H1 (cell line): ENCODE measurements at regions of chr17 and their contacts with region 1.

Region 1: GRCh38 chr17:50151041-50151936 is 812 bp upstream of the PPP1R9B start:
- DNase-seq: peak; percentile 71 to 90
- H3K4me3 ChIP-seq: peak overlapping the region; percentile 57 to 65 (median 62)
- H3K27ac ChIP-seq: no peak overlapping the region
- H3K4me1 ChIP-seq: peaks cover 0 to 29% (median 17%) of the 10 kb centered on the region in 4 experiments; a peak in 6 of 7 replicates
- H3K27me3 ChIP-seq: peaks cover 2 to 17% (median 15%) of the 10 kb centered on the region in 4 experiments; a peak in 6 of 7 replicates
- CTCF ChIP-seq: peak; percentile 29 to 53 (median 32); a peak in 3 of 4 replicates
- EP300 ChIP-seq: 0 out of 3 replicates have a peak, but pooled peaks of 1 of the 2 experiments have one; percentile 17
- POLR2A ChIP-seq: no peak
- RAD21 ChIP-seq: peak in 1 of 2 experiments; percentile 6; a peak in 2 of 4 replicates

Region 2: DNA sequence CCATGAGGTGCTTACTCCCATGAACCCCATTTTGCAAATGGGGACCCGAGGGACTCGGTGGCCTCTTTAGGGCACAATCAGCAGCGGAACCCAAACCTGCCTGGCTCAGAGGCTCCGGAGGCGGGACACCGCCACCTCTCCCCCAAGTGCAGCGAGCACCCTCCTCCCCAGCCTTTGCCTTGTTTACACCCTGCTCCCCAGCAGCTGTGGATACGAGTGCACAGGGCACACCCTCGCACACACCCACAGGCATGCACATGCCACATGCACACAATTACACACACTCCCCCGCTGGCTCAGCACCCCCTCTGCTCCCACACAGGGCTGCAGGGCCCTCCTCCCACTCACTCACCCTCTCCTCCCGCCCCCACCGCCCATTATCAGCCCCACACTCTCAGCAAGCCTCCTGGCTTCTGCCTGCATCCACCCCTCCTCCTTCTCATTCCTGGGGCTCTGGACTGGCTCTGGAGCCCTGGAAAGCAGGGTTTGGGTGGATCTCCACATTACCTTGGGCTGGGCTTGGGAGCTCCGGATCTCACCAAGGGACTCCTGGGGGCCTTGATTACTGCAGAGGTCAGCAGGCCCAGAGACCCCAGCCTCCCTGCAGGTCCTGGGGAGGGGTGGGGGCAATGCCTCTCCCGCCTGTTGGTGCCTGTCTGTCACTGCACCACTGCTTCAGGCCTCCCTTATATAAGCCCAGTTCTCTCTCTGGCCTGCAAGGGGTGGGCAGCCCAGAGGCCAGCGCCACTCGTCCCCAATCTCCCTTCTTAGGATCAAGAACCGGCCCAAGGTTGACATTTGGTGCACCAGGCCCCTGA is 49.7 kb before region 1 on chr17:
- CTCF ChIA-PET with region 1: interaction called, 11 read pairs
- POLR2A ChIA-PET with region 1: no interaction called
- DNase-seq: no peak
- H3K4me3 ChIP-seq: peak overlapping the region in 2 of 4 experiments; percentile 15 to 16; a peak in 3 of 8 replicates
- H3K27ac ChIP-seq: no peak overlapping the region
- H3K4me1 ChIP-seq: peaks cover 0 to 19% (median 12%) of the 10 kb centered on the region in 4 experiments; a peak in 6 of 7 replicates
- H3K27me3 ChIP-seq: no peaks in the 10 kb centered on the region; a peak in 1 of 7 replicates
- CTCF ChIP-seq: no peak
- EP300 ChIP-seq: no peak
- POLR2A ChIP-seq: no peak
- RAD21 ChIP-seq: no peak

Region 3: DNA sequence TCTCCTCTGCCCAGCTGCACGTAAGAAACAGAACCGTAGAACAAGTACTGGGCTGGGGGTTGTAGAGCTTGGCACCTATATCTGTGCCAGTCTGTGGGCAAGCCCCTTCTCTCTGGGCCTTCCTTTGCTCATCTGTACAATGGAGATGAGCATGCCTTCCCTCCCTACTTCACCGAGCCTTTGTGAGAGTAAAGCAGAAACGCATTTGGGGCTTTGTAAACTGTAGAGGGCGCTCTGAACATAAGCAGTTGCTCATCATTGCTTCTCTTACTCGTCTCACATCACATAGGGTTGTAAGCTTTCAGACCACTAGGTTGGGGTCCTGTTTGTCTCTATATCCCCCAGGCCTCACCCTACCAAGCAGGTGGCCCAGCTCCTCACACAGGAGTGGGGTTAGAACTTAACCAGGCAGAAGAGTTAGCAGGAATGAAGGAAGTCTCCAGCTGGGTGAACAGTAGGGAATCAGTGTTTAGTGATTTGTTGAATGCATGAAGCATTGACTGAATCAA is 36.4 kb before region 1 on chr17:
- CTCF ChIA-PET with region 1: interaction called, 123 read pairs
- POLR2A ChIA-PET with region 1: interaction called, 4 read pairs
- DNase-seq: peak in 1 of 2 experiments; percentile 66
- H3K4me3 ChIP-seq: no peak overlapping the region
- H3K27ac ChIP-seq: no peak overlapping the region
- H3K4me1 ChIP-seq: peaks cover 6 to 14% (median 11%) of the 10 kb centered on the region in 4 experiments
- H3K27me3 ChIP-seq: peaks cover 0 to 18% (median 12%) of the 10 kb centered on the region in 4 experiments; a peak in 5 of 7 replicates
- CTCF ChIP-seq: peak in 2 of 3 experiments; percentile 89 to 93; a peak in 3 of 4 replicates
- EP300 ChIP-seq: no peak
- POLR2A ChIP-seq: no peak
- RAD21 ChIP-seq: peak; percentile 68 to 73

Region 4: DNA sequence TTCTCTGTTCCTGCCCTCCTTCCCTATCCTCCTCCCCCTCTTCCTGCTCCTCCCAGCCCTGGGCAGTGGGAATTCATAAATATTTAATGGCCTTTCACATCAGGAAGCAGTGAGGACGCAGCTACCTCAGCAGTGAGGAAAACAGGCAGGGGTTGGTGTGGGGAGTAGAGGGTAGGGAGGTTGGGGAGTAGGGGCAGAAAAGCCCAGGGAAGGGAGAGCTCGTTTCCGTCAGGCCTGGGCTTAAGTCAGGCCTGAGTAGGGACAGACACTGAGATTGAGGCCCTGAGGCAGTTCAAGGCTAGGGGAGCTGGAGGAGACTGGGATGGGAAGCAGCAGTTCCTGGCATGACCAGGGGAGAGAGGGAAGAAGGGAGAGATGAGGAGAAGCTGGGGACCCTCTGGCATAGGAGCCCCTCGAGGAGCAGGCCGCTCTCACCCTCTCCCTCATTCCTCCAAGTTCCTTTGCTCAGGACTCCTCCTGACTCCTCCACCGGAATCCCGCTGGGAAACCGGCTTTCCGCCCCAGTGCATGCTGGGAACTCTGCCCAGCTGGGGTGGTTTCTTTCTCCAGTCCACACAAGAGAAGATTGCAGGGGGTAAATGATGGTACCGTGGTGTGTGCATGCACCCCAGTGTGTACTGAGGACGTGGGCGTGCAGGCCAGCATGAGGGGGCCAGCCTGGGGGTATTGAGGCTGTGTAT is 27.5 kb before region 1 on chr17:
- CTCF ChIA-PET with region 1: interaction called, 299 read pairs
- POLR2A ChIA-PET with region 1: interaction called, 13 read pairs
- DNase-seq: no peak
- H3K4me3 ChIP-seq: 0 out of 8 replicates have a peak overlapping the region, but pooled peaks of 1 of the 4 experiments have one; percentile 3
- H3K27ac ChIP-seq: peak overlapping the region; percentile 37
- H3K4me1 ChIP-seq: peaks cover 5 to 24% (median 19%) of the 10 kb centered on the region in 4 experiments
- H3K27me3 ChIP-seq: peaks cover 0 to 11% (median 3%) of the 10 kb centered on the region in 4 experiments; a peak in 5 of 7 replicates
- CTCF ChIP-seq: no peak
- EP300 ChIP-seq: no peak
- POLR2A ChIP-seq: no peak
- RAD21 ChIP-seq: no peak

Region 5: GRCh38 chr17:50129728-50130558 is 21.3 kb before region 1 on chr17 and contains the start of gene SAMD14:
- CTCF ChIA-PET with region 1: interaction called, 299 read pairs
- POLR2A ChIA-PET with region 1: interaction called, 13 read pairs
- DNase-seq: no peak
- H3K4me3 ChIP-seq: peak within 1 kb of the TSS; percentile 37 to 97 (median 74)
- H3K27ac ChIP-seq: no peak within 1 kb of the TSS
- H3K4me1 ChIP-seq: peaks cover 8 to 34% (median 30%) of the 10 kb centered on the region in 4 experiments
- H3K27me3 ChIP-seq: peaks cover 0 to 11% (median 2%) of the 10 kb centered on the region in 4 experiments; a peak in 4 of 7 replicates
- CTCF ChIP-seq: no peak
- EP300 ChIP-seq: no peak
- POLR2A ChIP-seq: no peak
- RAD21 ChIP-seq: no peak
- total RNA-seq, gene SAMD14: 5.8 and 5.9 TPM in 2 replicates